Activated CD8-positive, alpha-beta T cell treated with anti-CD3 and anti-CD28 coated beads, Interleukin-2, amount 10 ng/mL, durations not matched to agents 7 days and 5 days (primary cell): ENCODE measurements at regions of chr1 and their contacts with region 1.

Region 1: DNA sequence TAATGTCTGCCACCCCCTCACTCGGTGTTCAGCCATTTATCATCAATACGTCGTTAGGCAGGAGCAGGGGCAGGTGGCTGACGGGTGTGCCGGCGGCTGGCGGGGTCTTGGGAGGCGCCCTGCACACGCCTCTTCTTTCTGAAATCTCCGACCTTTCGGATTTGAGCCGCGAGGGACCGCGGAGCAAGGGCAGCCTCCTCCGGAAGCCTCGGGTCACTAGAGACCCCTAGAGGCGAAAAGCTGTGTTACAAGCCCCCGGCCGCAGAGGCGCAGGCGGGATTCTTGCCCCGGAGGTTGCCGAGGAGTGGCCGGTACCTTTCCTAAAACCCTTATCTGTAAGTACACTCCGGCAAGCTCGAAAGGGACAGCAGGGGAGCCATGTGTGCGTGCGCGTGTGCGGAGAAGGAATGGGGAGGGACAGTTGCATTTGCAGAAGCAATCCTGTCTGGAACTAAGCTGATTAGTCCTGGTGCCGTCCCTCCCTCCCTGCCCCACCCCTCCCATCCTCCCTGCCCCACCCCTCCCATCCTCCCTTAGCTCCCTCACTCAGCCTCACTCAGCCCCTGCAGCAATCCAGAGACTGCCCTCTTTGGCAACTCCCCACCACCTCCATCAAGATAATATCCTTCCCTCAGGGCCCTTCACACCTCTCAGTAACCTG is 11.0 kb downstream of the BRINP2 start:
- DNase-seq: peak; percentile 54
- ATAC-seq: peak; percentile 61
- H3K4me3 Mint-ChIP-seq: peak overlapping the region; percentile 41
- H3K27ac Mint-ChIP-seq: no peak overlapping the region
- H3K4me1 Mint-ChIP-seq: peaks cover 7% of the 10 kb centered on the region
- H3K27me3 Mint-ChIP-seq: peaks cover 11% of the 10 kb centered on the region

Region 2: GRCh38 chr1:176897350-176898236 is 284.2 kb before region 1 on chr1:
- CTCF ChIA-PET with region 1: interaction called, 10 read pairs
- POLR2A ChIA-PET with region 1: no interaction called
- DNase-seq: peak; percentile 53
- ATAC-seq: no peak
- H3K4me3 Mint-ChIP-seq: no peak overlapping the region
- H3K27ac Mint-ChIP-seq: no peak overlapping the region
- H3K4me1 Mint-ChIP-seq: peaks cover 4% of the 10 kb centered on the region
- H3K27me3 Mint-ChIP-seq: no peaks in the 10 kb centered on the region